CD4-positive, alpha-beta T cell (primary cell): ENCODE measurements at regions of chr12 and their contacts with region 1.

Region 1: DNA sequence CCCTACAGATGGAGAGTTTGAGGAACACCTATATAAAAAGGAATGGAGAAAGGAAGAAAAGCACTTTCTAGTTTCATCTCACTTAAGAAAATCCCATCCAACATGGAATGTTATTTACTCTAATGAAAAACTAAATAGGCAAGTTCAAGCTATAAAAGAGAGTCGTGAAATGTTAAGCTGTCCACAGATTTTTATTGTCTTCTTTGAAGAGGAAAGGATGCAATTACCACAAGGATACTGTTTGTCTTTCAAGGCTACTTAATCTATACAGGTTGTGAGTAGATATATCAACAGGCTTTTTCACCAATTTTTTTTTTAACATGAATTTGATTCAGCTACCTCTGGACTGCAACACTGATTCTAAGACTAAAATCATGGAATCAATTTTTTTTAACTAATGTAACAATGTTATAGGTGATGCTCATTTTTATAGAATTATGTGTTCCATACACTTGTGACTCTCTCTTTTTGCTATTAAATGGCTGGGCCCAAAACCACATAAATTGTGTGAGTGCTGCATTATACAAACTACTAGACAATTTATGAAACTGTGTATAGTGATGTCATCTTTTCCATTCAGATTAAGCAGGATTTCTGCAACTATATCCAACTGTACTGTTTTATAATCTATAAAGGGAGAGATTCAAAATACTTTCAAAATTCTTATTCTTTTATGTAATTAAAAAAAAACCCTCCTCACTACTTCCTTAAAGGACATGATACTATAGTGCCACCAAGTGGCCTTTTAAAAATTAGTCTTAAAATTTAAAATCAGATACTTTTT is 26.8 kb upstream of the BMAL2 start:
- DNase-seq: peak in 3 of 14 experiments; percentile 52 to 59 (median 59)
- ATAC-seq: no peak
- H3K4me3 ChIP-seq: no peak overlapping the region
- H3K4me3 Mint-ChIP-seq: no peak overlapping the region
- H3K27ac ChIP-seq: no peak overlapping the region
- H3K27ac Mint-ChIP-seq: peak overlapping the region; percentile 67
- H3K4me1 ChIP-seq: no peaks in the 10 kb centered on the region
- H3K4me1 Mint-ChIP-seq: peaks cover 4% of the 10 kb centered on the region
- H3K27me3 ChIP-seq: no peaks in the 10 kb centered on the region
- H3K27me3 Mint-ChIP-seq: no peaks in the 10 kb centered on the region
- CTCF ChIP-seq: peak; percentile 71

Region 2: DNA sequence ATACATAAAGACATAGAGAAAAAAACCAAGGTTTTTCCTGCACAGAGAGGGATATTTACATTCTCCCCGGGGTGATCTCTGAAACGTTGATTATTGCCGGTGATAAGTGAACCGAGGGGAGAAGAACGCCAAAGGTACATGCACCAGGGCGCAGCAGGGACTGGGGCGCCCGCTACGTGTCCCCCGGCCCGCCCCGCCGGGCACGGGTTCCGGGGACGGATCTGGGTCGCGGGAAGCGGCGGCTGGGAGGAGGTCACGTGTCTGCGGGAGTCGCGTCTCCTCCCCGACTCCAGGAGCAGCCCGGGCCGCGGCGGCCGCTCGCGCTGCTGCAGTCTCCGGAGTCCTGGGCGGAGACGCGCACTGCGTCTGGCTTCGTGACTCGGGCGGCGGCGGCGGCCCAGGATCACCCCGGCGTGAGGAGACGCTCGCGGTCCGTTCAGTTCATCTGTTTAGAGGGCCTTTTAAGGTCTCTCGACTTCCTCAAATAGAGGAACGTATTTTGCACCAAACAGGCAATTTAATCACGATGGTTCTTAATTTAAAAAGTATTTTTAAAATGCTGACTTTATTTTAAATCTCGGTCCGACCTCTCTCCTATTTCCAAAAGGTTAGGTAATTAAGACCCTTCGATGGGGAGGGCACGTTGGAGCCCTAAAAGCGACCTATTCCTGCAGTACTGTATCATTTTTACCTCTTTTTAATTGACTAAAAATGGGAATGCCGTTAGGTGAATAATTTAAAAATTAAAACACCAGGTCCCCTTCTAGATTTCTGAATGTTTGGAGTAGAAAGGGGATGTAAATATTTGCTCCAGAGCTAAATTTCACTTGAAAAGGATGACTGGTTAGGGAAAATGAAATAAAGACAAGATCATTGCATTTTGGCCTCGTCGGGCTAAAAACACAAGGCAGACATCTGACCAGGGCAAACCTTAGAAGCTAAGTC is 1179.3 kb before region 1 on chr12:
- CTCF ChIA-PET with region 1: no interaction called
- POLR2A ChIA-PET with region 1: no interaction called
- intact Hi-C with region 1: loop called in 1 of 2 experiments (anchors 10 kb)
- DNase-seq: peak in 4 of 14 experiments; percentile 4 to 52 (median 32)
- ATAC-seq: no peak
- H3K4me3 ChIP-seq: peak overlapping the region; percentile 38
- H3K4me3 Mint-ChIP-seq: peak overlapping the region; percentile 79
- H3K27ac ChIP-seq: no peak overlapping the region
- H3K27ac Mint-ChIP-seq: no peak overlapping the region
- H3K4me1 ChIP-seq: peaks cover 44% of the 10 kb centered on the region
- H3K4me1 Mint-ChIP-seq: peaks cover 34% of the 10 kb centered on the region
- H3K27me3 ChIP-seq: peaks cover 67 to 81% of the 10 kb centered on the region in 2 experiments
- H3K27me3 Mint-ChIP-seq: peaks cover 86% of the 10 kb centered on the region
- CTCF ChIP-seq: no peak

Region 3: GRCh38 chr12:26884765-26885576 is 420.9 kb before region 1 on chr12:
- CTCF ChIA-PET with region 1: interaction called, 10 read pairs
- POLR2A ChIA-PET with region 1: no interaction called
- intact Hi-C with region 1: no loop called
- DNase-seq: peak; percentile 68 to 91 (median 78)
- ATAC-seq: peak; percentile 100
- H3K4me3 ChIP-seq: peak overlapping the region; percentile 19
- H3K4me3 Mint-ChIP-seq: peak overlapping the region; percentile 36
- H3K27ac ChIP-seq: no peak overlapping the region
- H3K27ac Mint-ChIP-seq: no peak overlapping the region
- H3K4me1 ChIP-seq: peaks cover 9% of the 10 kb centered on the region
- H3K4me1 Mint-ChIP-seq: peaks cover 7% of the 10 kb centered on the region
- H3K27me3 ChIP-seq: no peaks in the 10 kb centered on the region
- H3K27me3 Mint-ChIP-seq: peaks cover 9% of the 10 kb centered on the region
- CTCF ChIP-seq: peak; percentile 96

Region 4: GRCh38 chr12:27014085-27014858 is 291.6 kb before region 1 on chr12 and contains the start of gene TM7SF3:
- CTCF ChIA-PET with region 1: interaction called, 18 read pairs
- POLR2A ChIA-PET with region 1: interaction called, 6 read pairs
- intact Hi-C with region 1: loop called in 1 of 2 experiments (anchors 1 kb)
- DNase-seq: peak; percentile 91 to 99 (median 96)
- ATAC-seq: peak; percentile 82
- H3K4me3 ChIP-seq: peak within 1 kb of the TSS; percentile 89
- H3K4me3 Mint-ChIP-seq: peak within 1 kb of the TSS; percentile 93
- H3K27ac ChIP-seq: peak within 1 kb of the TSS; percentile 92 to 96
- H3K27ac Mint-ChIP-seq: peak within 1 kb of the TSS; percentile 97
- H3K4me1 ChIP-seq: peaks cover 25% of the 10 kb centered on the region
- H3K4me1 Mint-ChIP-seq: peaks cover 57% of the 10 kb centered on the region
- H3K27me3 ChIP-seq: no peaks in the 10 kb centered on the region
- H3K27me3 Mint-ChIP-seq: no peaks in the 10 kb centered on the region
- CTCF ChIP-seq: peak; percentile 99
- total RNA-seq, gene TM7SF3: 8.3 to 9.5 TPM

Region 5: GRCh38 chr12:27142101-27142721 is 163.7 kb before region 1 on chr12:
- CTCF ChIA-PET with region 1: no interaction called
- POLR2A ChIA-PET with region 1: no interaction called
- intact Hi-C with region 1: loop called in 1 of 2 experiments (anchors 5 kb)
- DNase-seq: peak in 11 of 14 experiments; percentile 1 to 75 (median 17)
- ATAC-seq: no peak
- H3K4me3 ChIP-seq: no peak overlapping the region
- H3K4me3 Mint-ChIP-seq: no peak overlapping the region
- H3K27ac ChIP-seq: no peak overlapping the region
- H3K27ac Mint-ChIP-seq: no peak overlapping the region
- H3K4me1 ChIP-seq: peaks cover 4% of the 10 kb centered on the region
- H3K4me1 Mint-ChIP-seq: no peaks in the 10 kb centered on the region
- H3K27me3 ChIP-seq: no peaks in the 10 kb centered on the region
- H3K27me3 Mint-ChIP-seq: no peaks in the 10 kb centered on the region
- CTCF ChIP-seq: peak; percentile 82